Posterior vena cava (tissue), 2 donors: ENCODE measurements at regions of chr19 and their contacts with region 1.

Region 1: GRCh38 chr19:572140-572742 is at the start of gene BSG:
- DNase-seq: peak; percentile 100
- total RNA-seq, gene BSG: 288 to 300 TPM

Region 2: DNA sequence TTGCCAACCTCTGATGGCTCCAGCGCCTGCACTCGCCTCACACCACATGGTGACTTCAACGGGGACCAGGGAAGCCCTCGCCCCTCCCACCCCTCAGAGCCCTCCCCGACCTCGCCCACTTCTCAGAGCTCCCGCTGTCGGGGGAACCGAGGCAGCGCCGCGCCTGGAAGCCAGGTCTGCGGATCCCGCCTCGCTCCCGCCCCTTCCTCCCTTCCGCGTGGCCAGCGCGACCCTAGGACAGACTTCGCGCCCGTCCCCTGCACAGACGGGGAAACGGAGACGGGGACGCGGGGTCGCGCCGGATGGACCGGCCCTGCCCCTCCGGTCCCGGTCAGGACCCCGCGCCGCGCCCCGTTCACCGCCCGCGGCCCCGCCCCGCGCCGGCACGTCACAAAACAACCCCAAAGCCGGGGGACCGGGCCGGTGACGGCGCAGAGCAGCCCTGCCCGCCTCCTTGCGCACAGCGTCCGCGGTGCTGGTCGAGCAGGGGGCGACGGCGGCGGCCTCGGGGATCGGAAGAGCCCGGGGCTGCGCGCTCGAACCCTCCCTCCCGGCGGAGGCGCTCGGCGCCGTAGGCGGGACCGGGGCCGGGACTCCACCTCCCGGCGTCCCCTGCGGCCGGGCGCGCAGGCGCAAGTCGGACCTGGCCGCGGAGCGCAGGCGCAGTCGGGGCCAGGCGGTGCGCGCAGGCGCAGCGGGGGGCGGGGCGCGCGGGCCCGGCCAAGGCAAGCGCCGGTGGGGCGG is 41.1 kb before region 1 on chr19:
- intact Hi-C with region 1: no loop called
- DNase-seq: peak; percentile 95

Region 3: DNA sequence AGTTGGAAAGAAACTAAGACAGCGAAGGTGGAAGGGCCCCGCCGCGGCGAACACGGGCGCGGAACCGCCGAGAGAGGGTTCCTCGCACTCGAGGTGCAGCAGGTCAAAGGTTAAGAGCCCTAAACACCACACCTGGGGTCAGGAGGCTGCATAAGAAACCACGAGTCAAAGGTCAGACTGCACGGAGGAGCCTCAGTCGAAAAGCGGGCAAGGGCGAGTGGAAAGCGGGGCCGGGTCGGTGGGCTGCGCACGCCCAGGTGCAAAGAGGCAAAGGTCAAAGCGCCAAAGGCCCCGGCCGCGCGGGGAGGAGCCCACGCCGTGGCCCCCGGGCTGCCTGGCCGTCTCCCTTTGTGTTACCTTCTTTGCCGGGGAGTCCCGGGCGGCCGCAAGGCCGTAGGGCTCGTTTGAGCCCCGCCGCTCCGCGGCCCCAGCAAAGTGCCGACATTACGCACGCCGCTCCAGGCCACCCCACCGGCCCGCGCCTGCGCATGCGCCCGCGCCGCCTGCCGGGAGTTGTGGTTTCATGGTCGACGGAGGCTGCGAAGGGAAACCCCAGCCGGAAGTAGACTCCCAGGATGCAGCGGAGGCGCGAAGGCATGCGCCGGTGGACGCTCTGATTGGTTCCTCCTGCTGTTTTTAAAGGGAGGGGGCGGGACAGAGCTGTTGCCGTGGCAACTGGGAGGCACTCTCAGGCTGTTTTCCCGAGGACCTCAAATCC is 61.0 kb after region 1 on chr19 and contains the start of gene POLRMT:
- intact Hi-C with region 1: loop called in 1 of 2 experiments (anchors 10 kb)
- DNase-seq: peak; percentile 100
- total RNA-seq, gene POLRMT: 25.6 to 30.7 TPM